Sciatic nerve (tissue), 2 donors: ENCODE measurements at regions of chr4 and their contacts with region 1.

Region 1: GRCh38 chr4:163251204-163251603 is 81.2 kb downstream of the NPY1R start:
- DNase-seq: no peak
- ATAC-seq: no peak

Region 2: GRCh38 chr4:162945713-162946112 is 305.5 kb before region 1 on chr4:
- intact Hi-C with region 1: loop called (anchors 5 kb)
- DNase-seq: no peak
- ATAC-seq: no peak

Region 3: DNA sequence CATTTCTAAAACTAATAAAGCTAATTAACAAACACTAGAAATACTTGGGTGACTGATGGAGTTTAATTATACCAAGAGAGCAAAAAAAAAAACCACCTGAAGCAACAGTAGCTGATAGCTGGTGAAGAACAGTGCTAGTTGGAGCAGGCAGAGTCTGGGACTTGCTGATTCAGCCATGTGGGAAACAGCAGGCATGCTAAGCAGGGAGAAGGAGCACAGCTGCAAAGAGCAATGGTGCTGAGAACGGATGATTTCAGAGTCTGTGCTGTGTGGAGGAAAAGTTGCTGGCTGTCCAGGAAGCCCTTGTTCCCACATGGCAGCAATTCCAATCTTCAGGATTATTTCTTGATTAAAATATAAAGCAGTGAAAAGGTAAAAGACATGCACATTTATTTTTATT is 12.4 kb after region 1 on chr4:
- intact Hi-C with region 1: no loop called
- DNase-seq: no peak
- ATAC-seq: no peak

Region 4: DNA sequence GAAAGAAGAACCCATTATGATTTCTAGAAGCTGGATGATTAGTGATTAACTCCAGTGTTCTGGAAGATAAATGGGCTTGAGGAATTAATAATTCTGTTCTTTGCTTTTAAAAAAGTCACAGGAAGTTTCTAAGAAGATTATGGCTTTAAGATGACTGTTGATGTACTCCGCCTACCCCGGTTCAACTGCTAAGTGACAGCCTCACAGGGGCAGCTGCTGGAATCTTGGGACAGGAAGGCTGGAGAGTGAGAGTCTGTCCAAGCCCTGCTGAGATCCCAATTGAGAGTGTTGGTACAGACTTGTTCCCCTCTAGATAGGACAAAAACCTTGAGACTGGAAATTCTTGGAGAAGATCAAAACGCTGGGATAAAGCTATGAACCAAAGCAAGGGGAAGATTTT is 43.9 kb after region 1 on chr4:
- intact Hi-C with region 1: no loop called
- DNase-seq: no peak
- ATAC-seq: no peak